Ovary (tissue), 10 donors: ENCODE measurements at regions of chr7 and their contacts with region 1.

Region 1: DNA sequence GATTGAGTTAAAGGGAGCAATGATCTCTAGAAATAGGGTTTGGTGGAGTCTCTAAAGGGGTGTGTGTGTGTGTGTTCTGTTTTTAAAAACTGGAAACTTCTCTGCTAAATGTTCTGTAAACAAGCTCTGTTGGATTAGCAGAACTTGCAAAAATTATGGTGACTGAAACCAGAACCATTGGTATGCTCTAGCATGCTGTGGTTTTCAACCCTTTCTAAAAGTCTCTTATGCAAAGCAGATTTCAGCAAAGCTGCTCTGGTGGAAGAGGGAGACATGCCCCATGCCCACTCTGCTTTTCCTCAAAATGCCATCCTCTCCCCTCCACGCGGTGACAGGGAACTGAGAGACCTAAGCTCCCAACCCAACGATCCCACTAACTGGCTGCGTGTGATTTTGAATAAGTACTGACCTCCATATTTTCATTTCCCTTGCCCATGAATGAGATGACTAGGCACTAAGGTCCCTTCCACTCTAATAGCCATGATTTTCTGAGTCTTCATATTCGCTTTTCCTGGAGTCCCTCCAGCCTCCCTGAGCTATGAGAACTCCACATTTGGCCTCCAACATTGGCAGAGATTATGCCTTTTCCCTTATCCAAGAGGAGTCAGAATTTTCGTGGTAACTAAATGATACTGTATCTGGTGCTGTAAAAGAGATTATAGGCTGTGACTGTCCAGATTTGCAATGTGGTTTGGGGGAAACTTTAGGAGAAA is 117.3 kb upstream of the PALS2 start:
- DNase-seq: no peak
- H3K4me3 ChIP-seq: no peak overlapping the region
- H3K27ac ChIP-seq: no peak overlapping the region
- H3K4me1 ChIP-seq: peaks cover 2% of the 10 kb centered on the region
- H3K27me3 ChIP-seq: no peaks in the 10 kb centered on the region
- CTCF ChIP-seq: no peak
- EP300 ChIP-seq: no peak
- POLR2A ChIP-seq: no peak

Region 2: GRCh38 chr7:24336461-24336860 is 119.5 kb before region 1 on chr7:
- intact Hi-C with region 1: no loop called
- DNase-seq: no peak
- H3K4me3 ChIP-seq: no peak overlapping the region
- H3K27ac ChIP-seq: no peak overlapping the region
- H3K4me1 ChIP-seq: no peaks in the 10 kb centered on the region
- H3K27me3 ChIP-seq: no peaks in the 10 kb centered on the region
- CTCF ChIP-seq: no peak
- EP300 ChIP-seq: no peak
- POLR2A ChIP-seq: no peak

Region 3: DNA sequence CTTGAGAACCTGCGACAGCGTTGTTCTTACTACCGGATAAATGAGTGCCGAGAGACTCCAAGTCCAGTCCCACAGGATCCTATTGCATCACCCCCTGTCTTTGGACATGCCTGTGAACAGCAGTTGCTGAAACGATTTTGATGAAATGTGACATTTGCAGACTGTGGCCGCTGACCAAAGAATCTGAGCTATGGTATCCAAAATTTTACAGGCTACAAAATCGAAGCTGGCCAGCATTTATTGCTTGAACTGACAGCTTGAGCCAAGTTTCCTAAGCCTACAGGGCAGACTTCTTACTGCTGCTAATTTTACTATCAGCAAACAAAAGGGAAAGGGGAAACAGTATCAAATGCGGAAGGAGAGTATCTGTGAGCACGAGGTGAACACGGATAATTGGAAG is 784.4 kb after region 1 on chr7:
- intact Hi-C with region 1: loop called in 1 of 4 experiments (anchors 10 kb)
- DNase-seq: no peak
- H3K4me3 ChIP-seq: no peak overlapping the region
- H3K27ac ChIP-seq: no peak overlapping the region
- H3K4me1 ChIP-seq: peaks cover 4% of the 10 kb centered on the region
- H3K27me3 ChIP-seq: no peaks in the 10 kb centered on the region
- CTCF ChIP-seq: no peak
- EP300 ChIP-seq: no peak
- POLR2A ChIP-seq: no peak